WTC11 (cell line): ENCODE measurements at regions of chr6 and their contacts with region 1.

Region 1: GRCh38 chr6:106560996-106561685 is 68.2 kb downstream of the RTN4IP1 start:
- DNase-seq: no peak
- ATAC-seq: no peak
- H3K4me3 Mint-ChIP-seq: no peak overlapping the region
- H3K27ac Mint-ChIP-seq: no peak overlapping the region
- H3K4me1 Mint-ChIP-seq: peaks cover 21% of the 10 kb centered on the region
- H3K27me3 Mint-ChIP-seq: no peaks in the 10 kb centered on the region
- CTCF ChIP-seq: no peak

Region 2: DNA sequence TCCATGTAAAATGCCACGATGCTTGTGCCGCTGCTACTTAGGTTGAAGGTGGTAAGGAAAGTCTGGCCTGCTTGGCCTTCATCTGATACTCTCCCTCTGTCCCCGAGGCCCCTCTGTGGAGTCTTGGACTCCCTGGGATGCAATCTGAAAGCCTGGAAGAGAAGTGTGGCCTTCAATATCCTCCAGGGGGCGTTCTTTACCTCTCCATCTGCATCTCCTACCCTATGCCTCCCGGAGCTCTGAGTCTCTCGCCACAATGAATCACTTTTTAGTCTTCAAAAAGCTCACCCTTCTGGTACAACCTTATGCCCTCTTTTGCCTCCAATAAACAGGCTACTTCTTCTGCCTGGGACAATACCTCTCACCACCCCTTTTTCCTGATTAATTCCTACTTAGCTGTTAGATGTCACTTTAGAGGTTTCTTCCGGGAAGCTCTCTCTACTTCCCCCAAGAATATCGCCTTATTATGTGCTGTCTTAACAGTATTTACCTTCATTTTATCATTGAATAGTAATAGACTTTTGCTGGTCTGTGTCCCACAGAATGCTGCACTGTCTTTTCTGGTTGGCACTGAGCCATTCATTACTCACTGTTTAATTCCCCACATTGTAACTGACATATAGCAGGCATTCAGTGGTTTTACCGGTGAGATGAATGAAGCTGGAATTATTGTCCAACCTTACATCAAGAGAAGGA is 221.7 kb before region 1 on chr6:
- CTCF ChIA-PET with region 1: interaction called, 26 read pairs
- POLR2A ChIA-PET with region 1: no interaction called
- DNase-seq: peak; percentile 57
- ATAC-seq: peak; percentile 99
- H3K4me3 Mint-ChIP-seq: no peak overlapping the region
- H3K27ac Mint-ChIP-seq: no peak overlapping the region
- H3K4me1 Mint-ChIP-seq: peaks cover 3% of the 10 kb centered on the region
- H3K27me3 Mint-ChIP-seq: no peaks in the 10 kb centered on the region
- CTCF ChIP-seq: peak; percentile 84

Region 3: DNA sequence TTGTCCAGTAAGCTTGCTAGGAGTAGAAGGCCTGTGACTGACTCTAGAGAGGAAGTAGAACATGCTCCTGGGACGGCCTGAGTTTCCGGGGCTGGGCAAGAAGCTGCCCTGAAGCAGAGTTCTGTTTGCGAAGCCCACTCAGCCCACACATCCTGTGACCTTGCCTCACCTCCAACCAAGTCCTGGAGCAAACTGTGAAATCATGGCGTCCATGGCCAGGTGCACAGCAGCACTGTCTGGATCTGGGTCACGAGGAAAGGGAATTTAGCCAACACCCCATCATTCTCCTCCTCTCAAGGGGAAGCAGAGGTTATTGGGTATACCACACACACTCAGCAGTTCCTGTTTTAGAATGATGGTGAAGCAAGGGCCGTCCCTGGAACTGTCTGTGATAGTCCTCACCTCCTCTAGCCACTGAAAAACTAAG is 113.1 kb before region 1 on chr6:
- CTCF ChIA-PET with region 1: interaction called, 26 read pairs
- POLR2A ChIA-PET with region 1: no interaction called
- DNase-seq: no peak
- ATAC-seq: no peak
- H3K4me3 Mint-ChIP-seq: no peak overlapping the region
- H3K27ac Mint-ChIP-seq: no peak overlapping the region
- H3K4me1 Mint-ChIP-seq: peaks cover 19% of the 10 kb centered on the region
- H3K27me3 Mint-ChIP-seq: no peaks in the 10 kb centered on the region
- CTCF ChIP-seq: no peak

Region 4: GRCh38 chr6:106512048-106512967 is 48.8 kb before region 1 on chr6:
- CTCF ChIA-PET with region 1: interaction called, 40 read pairs
- POLR2A ChIA-PET with region 1: no interaction called
- DNase-seq: peak; percentile 70
- ATAC-seq: peak; percentile 59
- H3K4me3 Mint-ChIP-seq: peak overlapping the region; percentile 88
- H3K27ac Mint-ChIP-seq: no peak overlapping the region
- H3K4me1 Mint-ChIP-seq: peaks cover 31% of the 10 kb centered on the region
- H3K27me3 Mint-ChIP-seq: peaks cover 72% of the 10 kb centered on the region
- CTCF ChIP-seq: no peak

Region 5: DNA sequence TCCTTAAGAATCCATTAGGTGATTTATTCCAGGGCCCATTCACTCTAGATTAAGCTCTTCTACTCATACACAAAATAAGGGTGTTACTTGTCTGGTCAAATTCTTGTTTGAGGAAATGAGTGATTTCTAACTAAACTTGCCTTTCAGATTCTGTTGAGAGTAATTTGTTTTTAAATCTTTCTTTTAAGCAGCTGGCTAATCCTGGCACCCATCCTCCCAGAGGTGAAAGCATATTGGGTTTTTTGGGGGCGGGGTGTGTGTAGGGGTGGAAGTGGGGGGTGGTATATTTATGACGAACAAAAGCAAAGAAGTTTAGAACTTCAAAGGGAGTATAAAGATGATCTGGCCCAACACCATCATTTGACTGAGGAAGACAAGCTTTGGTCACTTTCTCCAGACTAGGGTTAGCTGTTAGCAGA is 26.6 kb before region 1 on chr6:
- CTCF ChIA-PET with region 1: interaction called, 10 read pairs
- POLR2A ChIA-PET with region 1: no interaction called
- DNase-seq: no peak
- ATAC-seq: no peak
- H3K4me3 Mint-ChIP-seq: no peak overlapping the region
- H3K27ac Mint-ChIP-seq: no peak overlapping the region
- H3K4me1 Mint-ChIP-seq: peaks cover 9% of the 10 kb centered on the region
- H3K27me3 Mint-ChIP-seq: no peaks in the 10 kb centered on the region
- CTCF ChIP-seq: no peak

Region 6: DNA sequence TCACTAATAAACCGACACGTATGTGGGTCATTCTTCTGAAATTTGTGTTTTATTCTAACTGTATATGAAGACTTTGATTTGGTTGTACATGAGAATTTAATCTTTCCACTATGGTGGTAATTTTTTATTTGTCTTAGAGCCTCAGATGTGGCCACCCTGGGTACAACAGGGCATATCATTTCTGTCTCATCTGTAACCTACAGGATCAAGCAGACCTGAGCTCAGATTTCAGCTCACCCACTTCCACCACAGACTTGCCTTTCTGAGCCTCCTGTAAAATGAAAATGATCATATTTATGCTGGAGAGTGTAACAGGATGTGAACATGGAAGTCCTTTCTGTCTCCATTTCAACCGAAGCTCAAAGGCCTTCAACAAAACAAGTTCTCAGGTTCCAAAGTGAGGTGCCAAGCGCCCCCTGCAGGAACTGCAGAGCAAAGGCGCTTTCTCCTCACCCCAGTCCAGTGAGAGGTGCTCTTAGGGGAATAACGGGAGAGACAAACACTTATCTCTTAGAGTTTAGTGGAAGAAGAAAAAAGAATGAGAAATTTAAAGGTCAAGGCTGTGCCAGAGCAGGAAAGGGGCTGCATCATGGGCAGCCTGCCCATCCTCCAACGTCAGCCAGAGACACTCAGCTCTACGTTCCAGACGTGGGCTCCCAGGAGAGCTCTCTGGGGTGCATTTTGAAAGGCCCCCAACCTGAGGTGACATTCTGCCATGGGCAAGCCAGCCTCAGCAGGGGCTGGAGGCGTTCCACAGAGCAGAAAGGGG is 436.4 kb after region 1 on chr6:
- CTCF ChIA-PET with region 1: interaction called, 13 read pairs
- POLR2A ChIA-PET with region 1: no interaction called
- DNase-seq: peak; percentile 86
- ATAC-seq: peak; percentile 91
- H3K4me3 Mint-ChIP-seq: no peak overlapping the region
- H3K27ac Mint-ChIP-seq: no peak overlapping the region
- H3K4me1 Mint-ChIP-seq: peaks cover 20% of the 10 kb centered on the region
- H3K27me3 Mint-ChIP-seq: no peaks in the 10 kb centered on the region; the same call in 1 of the 2 replicates
- CTCF ChIP-seq: peak; percentile 90